Heart left ventricle (tissue), 16 donors: ENCODE measurements at regions of chr10 and their contacts with region 1.

Region 1: GRCh38 chr10:2351566-2351965 is 614.2 kb upstream of the ADARB2 start:
- DNase-seq: no peak
- ATAC-seq: no peak
- H3K4me3 ChIP-seq: no peak overlapping the region
- H3K27ac ChIP-seq: no peak overlapping the region
- H3K4me1 ChIP-seq: no peaks in the 10 kb centered on the region
- H3K27me3 ChIP-seq: peaks cover 0 to 3% (median 0%) of the 10 kb centered on the region in 9 donors
- CTCF ChIP-seq: no peak
- POLR2A ChIP-seq: no peak

Region 2: GRCh38 chr10:2306081-2306480 is 45.5 kb before region 1 on chr10:
- intact Hi-C with region 1: loop called in 1 of 10 experiments (anchors 2 kb)
- DNase-seq: no peak
- ATAC-seq: no peak
- H3K4me3 ChIP-seq: no peak overlapping the region
- H3K27ac ChIP-seq: no peak overlapping the region
- H3K4me1 ChIP-seq: no peaks in the 10 kb centered on the region
- H3K27me3 ChIP-seq: no peaks in the 10 kb centered on the region
- CTCF ChIP-seq: no peak
- POLR2A ChIP-seq: no peak

Region 3: GRCh38 chr10:2414562-2414961 is 63.0 kb after region 1 on chr10:
- intact Hi-C with region 1: no loop called
- DNase-seq: no peak
- ATAC-seq: no peak
- H3K4me3 ChIP-seq: no peak overlapping the region
- H3K27ac ChIP-seq: no peak overlapping the region
- H3K4me1 ChIP-seq: no peaks in the 10 kb centered on the region
- H3K27me3 ChIP-seq: no peaks in the 10 kb centered on the region
- CTCF ChIP-seq: no peak
- POLR2A ChIP-seq: no peak